ENCODE measurements at regions of chr17 and their contacts with region 1.

Region 1: DNA sequence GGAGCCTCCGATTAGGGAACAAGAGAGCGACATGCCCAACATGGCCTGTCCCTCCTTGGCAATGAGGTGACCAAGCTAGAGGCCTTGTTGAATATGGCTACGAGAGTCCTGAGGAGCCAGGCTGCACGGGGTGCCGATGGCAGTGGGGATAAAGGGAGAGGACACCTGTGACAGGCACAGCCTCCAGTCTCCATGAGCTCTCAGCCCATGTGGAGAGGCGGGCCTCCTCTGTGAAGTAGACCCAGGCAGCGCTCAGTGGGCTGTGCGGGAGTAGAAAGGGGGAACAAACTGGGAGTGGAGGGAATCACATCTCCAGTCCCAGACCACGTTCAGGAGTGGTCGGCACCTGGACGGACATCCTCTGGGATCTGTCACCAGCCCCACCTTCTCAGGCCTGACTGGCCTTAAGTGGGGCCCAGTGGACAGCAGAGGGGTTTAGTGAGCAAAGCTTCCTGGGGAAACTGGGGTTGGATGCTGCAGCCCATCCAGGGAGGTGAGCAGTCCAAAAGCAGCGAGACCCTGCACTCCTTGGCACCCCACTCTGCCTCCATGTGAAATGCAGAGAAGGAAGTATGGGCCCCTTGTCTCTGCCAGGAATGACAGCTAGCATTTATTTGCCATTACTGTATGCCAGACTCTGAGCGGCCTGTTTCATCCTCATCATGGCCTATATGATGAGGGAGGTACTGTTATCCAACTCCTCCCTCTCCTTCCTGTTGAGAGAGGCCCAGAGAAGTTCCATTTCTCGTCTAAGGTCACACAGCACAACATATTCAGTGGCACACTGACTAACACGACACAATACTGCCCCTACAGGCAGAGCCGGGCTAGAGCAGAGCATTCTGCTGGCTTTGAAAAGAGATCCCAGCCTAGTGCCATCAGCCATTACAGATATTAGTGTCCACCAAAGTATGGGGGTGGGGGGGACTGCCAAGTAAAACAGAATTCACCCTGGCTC is 4.5 kb upstream of the TMEM92 start:
- DNase-seq: peak in 8 of 9 donors; percentile 12 to 58 (median 35)
- ATAC-seq: peak; percentile 85
- H3K4me3 ChIP-seq: no peak overlapping the region
- H3K4me3 Mint-ChIP-seq: no peak overlapping the region
- H3K27ac ChIP-seq: no peak overlapping the region
- H3K27ac Mint-ChIP-seq: no peak overlapping the region
- H3K4me1 ChIP-seq: no peaks in the 10 kb centered on the region
- H3K4me1 Mint-ChIP-seq: peaks cover 5 to 14% (median 7%) of the 10 kb centered on the region in 7 donors
- H3K27me3 ChIP-seq: peaks cover 0 to 3% of the 10 kb centered on the region in 2 donors
- H3K27me3 Mint-ChIP-seq: peaks cover 13 to 22% (median 17%) of the 10 kb centered on the region in 5 donors

Region 2: DNA sequence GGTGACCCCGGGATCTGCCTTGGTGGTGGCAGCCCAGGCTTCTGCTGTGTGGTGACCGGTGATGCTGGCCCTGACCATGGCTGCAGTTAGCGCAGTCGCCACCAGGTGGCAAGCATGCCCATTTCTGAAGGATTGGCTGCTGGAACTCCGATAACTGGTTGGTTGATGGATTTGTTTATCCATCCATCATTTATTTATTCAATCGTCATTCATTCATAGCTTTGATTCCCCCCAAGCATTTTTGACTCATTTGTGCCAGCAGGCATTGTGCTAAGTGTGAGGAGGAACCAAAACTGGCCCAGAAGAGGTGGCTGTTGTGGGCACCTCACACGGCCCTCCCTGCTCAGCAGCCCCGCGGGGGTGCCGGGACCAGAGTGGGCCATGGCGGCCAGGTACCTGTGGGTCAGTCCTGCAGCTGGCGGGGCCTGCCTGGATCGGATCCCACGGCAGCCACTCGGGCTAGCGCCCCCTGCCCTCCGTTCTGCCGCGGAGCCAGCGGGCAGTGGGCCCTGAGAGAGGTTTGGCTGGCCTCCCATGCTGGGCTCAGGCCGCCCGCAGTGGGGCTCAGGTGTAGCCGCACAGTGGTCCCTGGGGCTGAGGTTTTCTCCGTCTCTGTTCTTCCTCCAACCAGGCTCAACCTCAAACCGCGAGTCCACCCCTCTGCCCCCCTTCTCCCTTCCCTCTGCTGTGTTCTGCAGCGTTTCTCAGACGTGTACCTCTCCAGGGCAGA is 242.7 kb before region 1 on chr17:
- CTCF ChIA-PET with region 1: no interaction called
- POLR2A ChIA-PET with region 1: no interaction called
- intact Hi-C with region 1: loop called in 1 of 2 experiments (anchors 10 kb)
- DNase-seq: peak; percentile 33 to 81 (median 69)
- ATAC-seq: peak; percentile 80
- H3K4me3 ChIP-seq: no peak overlapping the region
- H3K4me3 Mint-ChIP-seq: peak overlapping the region in 7 of 10 donors; percentile 17 to 74 (median 54)
- H3K27ac ChIP-seq: no peak overlapping the region
- H3K27ac Mint-ChIP-seq: no peak overlapping the region
- H3K4me1 ChIP-seq: peaks cover 0 to 8% of the 10 kb centered on the region in 2 donors
- H3K4me1 Mint-ChIP-seq: peaks cover 5 to 13% (median 10%) of the 10 kb centered on the region in 7 donors
- H3K27me3 ChIP-seq: peaks cover 0 to 6% of the 10 kb centered on the region in 2 donors
- H3K27me3 Mint-ChIP-seq: peaks cover 20 to 33% (median 25%) of the 10 kb centered on the region in 5 donors

Region 3: DNA sequence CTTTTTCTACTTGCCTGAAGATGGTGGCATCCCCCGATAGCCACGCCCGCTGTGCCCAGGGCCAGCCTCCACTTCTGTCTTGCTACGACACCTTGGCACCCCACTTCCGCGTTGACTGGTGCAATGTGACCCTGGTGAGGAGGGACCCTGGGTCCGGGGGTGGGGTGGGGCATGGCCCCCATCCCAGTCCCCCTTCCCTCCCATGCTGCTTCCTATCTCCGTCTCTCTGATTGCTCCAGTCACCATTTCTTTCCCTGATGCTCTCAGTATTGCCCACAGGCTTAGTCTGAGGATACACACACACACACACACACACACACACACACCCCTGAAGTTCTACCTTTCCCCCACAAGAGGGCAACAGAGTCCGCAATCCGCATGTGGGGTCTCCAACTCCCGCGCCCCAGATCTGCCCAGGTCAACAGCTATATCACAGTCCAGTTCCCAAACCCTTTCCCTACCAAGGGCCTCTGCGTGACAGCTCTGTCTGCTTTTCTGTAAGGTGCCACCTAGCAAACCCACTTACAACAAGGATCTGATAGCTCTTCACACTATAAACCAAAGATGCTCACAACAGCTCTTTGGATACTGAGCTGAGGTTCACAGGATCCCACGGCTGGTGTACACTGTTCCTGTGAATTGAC is 100.5 kb before region 1 on chr17:
- CTCF ChIA-PET with region 1: interaction called, 5 read pairs
- POLR2A ChIA-PET with region 1: no interaction called
- intact Hi-C with region 1: loop called in 1 of 2 experiments (anchors 1 kb)
- DNase-seq: peak; percentile 50 to 78 (median 71)
- ATAC-seq: peak; percentile 93
- H3K4me3 ChIP-seq: peak overlapping the region; percentile 52
- H3K4me3 Mint-ChIP-seq: peak overlapping the region; percentile 42 to 78 (median 62)
- H3K27ac ChIP-seq: peak overlapping the region; percentile 38
- H3K27ac Mint-ChIP-seq: peak overlapping the region; percentile 24 to 93 (median 79)
- H3K4me1 ChIP-seq: peaks cover 9 to 10% of the 10 kb centered on the region in 2 donors
- H3K4me1 Mint-ChIP-seq: peaks cover 11 to 14% (median 12%) of the 10 kb centered on the region in 7 donors
- H3K27me3 ChIP-seq: no peaks in the 10 kb centered on the region
- H3K27me3 Mint-ChIP-seq: no peaks in the 10 kb centered on the region

Region 4: GRCh38 chr17:50218771-50219315 is 50.9 kb before region 1 on chr17:
- CTCF ChIA-PET with region 1: interaction called, 3 read pairs
- POLR2A ChIA-PET with region 1: no interaction called
- intact Hi-C with region 1: loop called in 1 of 2 experiments (anchors 5 kb)
- DNase-seq: no peak
- ATAC-seq: no peak
- H3K4me3 ChIP-seq: no peak overlapping the region
- H3K4me3 Mint-ChIP-seq: no peak overlapping the region
- H3K27ac ChIP-seq: no peak overlapping the region
- H3K27ac Mint-ChIP-seq: no peak overlapping the region
- H3K4me1 ChIP-seq: no peaks in the 10 kb centered on the region
- H3K4me1 Mint-ChIP-seq: peaks cover 0 to 10% (median 4%) of the 10 kb centered on the region in 7 donors
- H3K27me3 ChIP-seq: no peaks in the 10 kb centered on the region
- H3K27me3 Mint-ChIP-seq: peaks cover 0 to 39% (median 0%) of the 10 kb centered on the region in 5 donors